CD4-positive, alpha-beta T cell (primary cell): ENCODE measurements at regions of chr15 and their contacts with region 1.

Region 1: DNA sequence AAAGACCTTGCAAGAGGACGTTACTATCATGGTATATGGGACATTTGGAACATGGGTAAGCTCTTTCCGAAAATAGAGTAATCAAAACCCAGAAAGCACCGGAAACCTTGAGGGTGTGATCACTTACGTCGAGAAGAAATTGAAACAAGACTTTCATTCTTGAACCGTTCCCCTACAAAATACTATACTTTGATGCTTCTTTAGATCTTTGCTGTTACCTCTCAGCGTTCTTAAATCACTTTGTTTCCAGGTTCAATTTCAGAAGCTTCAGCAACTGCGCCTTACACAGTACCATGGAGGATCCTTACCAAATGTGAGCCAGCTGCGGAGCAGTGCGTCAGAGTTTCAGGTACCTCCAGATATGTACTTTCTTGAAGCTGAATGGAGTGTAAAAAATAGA is 10.1 kb downstream of the CRTC3 start:
- DNase-seq: peak in 9 of 14 experiments; percentile 13 to 74 (median 45)
- ATAC-seq: peak; percentile 87
- H3K4me3 ChIP-seq: peak overlapping the region; percentile 54
- H3K4me3 Mint-ChIP-seq: peak overlapping the region; percentile 89
- H3K27ac ChIP-seq: peak overlapping the region; percentile 49 to 83
- H3K27ac Mint-ChIP-seq: peak overlapping the region; percentile 97
- H3K4me1 ChIP-seq: peaks cover 35% of the 10 kb centered on the region
- H3K4me1 Mint-ChIP-seq: peaks cover 80% of the 10 kb centered on the region
- H3K27me3 ChIP-seq: no peaks in the 10 kb centered on the region
- H3K27me3 Mint-ChIP-seq: no peaks in the 10 kb centered on the region
- CTCF ChIP-seq: no peak

Region 2: GRCh38 chr15:90529371-90530249 is 10.2 kb before region 1 on chr15 and contains the start of gene CRTC3:
- CTCF ChIA-PET with region 1: interaction called, 14 read pairs
- POLR2A ChIA-PET with region 1: interaction called, 67 read pairs
- intact Hi-C with region 1: no loop called
- DNase-seq: peak; percentile 31 to 85 (median 54)
- ATAC-seq: peak; percentile 80
- H3K4me3 ChIP-seq: peak within 1 kb of the TSS; percentile 94
- H3K4me3 Mint-ChIP-seq: peak within 1 kb of the TSS; percentile 97
- H3K27ac ChIP-seq: peak within 1 kb of the TSS; percentile 44 to 72
- H3K27ac Mint-ChIP-seq: peak within 1 kb of the TSS; percentile 92
- H3K4me1 ChIP-seq: peaks cover 36% of the 10 kb centered on the region
- H3K4me1 Mint-ChIP-seq: peaks cover 39% of the 10 kb centered on the region
- H3K27me3 ChIP-seq: no peaks in the 10 kb centered on the region
- H3K27me3 Mint-ChIP-seq: no peaks in the 10 kb centered on the region
- CTCF ChIP-seq: no peak
- total RNA-seq, gene CRTC3: 90.7 to 92.4 TPM

Region 3: DNA sequence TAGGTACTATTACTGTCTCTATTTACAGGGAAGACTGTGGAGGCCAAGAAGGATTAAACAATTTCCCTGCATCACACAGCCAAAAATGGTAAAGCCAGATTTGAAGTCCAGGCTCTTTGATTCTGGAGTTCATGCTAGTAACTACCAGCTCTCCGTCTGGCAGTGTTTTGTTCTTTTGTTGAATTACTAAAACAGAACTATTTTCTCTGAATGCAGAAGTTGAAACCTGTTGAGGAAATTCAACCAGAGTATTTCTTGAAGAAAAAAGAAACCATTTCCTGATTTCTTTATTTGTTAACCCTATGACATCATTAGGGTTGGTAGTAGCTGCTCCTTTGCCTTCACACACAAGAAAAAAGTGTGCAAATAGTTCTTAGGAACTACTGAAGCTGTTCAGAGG is 24.3 kb after region 1 on chr15:
- CTCF ChIA-PET with region 1: interaction called, 4 read pairs
- POLR2A ChIA-PET with region 1: interaction called, 23 read pairs
- intact Hi-C with region 1: loop called in 1 of 2 experiments (anchors 2 kb)
- DNase-seq: peak in 3 of 14 experiments; percentile 58 to 63 (median 61)
- ATAC-seq: peak; percentile 38
- H3K4me3 ChIP-seq: no peak overlapping the region
- H3K4me3 Mint-ChIP-seq: peak overlapping the region; percentile 85
- H3K27ac ChIP-seq: peak overlapping the region; percentile 62 to 68
- H3K27ac Mint-ChIP-seq: peak overlapping the region; percentile 93
- H3K4me1 ChIP-seq: peaks cover 79% of the 10 kb centered on the region
- H3K4me1 Mint-ChIP-seq: peaks cover 87% of the 10 kb centered on the region
- H3K27me3 ChIP-seq: no peaks in the 10 kb centered on the region
- H3K27me3 Mint-ChIP-seq: no peaks in the 10 kb centered on the region
- CTCF ChIP-seq: no peak

Region 4: DNA sequence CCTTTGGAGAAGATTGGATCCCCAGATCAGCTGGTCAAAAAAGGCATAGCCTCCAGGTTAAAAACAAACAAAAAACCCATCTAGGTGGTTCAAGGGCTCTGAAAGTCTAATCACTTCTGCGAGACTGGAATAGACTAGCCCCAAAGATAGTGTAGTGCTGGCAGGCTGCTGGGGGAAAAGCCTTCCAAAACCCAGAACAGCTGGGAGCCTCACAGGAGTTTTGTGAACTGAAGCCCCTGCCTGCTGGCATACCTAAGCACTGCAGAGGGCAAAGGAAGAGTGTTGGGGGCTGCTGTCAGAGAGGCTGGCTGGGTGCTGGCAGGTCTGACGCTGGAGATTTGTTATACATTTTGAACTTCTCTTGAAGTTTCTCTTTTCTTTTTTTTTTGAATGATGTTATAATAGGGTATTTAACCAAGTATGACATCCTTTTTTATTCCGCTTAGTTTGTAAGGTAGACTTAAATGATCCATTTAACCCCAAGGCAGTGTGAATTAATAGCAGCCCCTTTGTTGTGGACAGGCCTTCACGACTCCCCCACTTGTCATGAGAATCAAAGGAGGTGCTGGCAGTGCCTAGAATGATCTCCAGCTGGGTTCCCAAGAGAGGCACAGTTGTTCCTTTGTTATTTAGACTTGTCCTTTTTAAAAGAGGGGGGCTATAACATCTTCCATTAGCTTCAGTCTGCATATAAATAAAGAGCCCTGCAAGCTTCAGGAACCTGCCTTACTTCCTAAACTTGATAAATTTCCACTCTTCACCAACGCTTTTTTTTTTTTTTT is 43.9 kb after region 1 on chr15:
- CTCF ChIA-PET with region 1: no interaction called
- POLR2A ChIA-PET with region 1: interaction called, 10 read pairs
- intact Hi-C with region 1: no loop called
- DNase-seq: no peak
- ATAC-seq: no peak
- H3K4me3 ChIP-seq: no peak overlapping the region
- H3K4me3 Mint-ChIP-seq: no peak overlapping the region
- H3K27ac ChIP-seq: no peak overlapping the region
- H3K27ac Mint-ChIP-seq: peak overlapping the region; percentile 89
- H3K4me1 ChIP-seq: peaks cover 59% of the 10 kb centered on the region
- H3K4me1 Mint-ChIP-seq: peaks cover 66% of the 10 kb centered on the region
- H3K27me3 ChIP-seq: no peaks in the 10 kb centered on the region
- H3K27me3 Mint-ChIP-seq: no peaks in the 10 kb centered on the region
- CTCF ChIP-seq: no peak

Region 5: DNA sequence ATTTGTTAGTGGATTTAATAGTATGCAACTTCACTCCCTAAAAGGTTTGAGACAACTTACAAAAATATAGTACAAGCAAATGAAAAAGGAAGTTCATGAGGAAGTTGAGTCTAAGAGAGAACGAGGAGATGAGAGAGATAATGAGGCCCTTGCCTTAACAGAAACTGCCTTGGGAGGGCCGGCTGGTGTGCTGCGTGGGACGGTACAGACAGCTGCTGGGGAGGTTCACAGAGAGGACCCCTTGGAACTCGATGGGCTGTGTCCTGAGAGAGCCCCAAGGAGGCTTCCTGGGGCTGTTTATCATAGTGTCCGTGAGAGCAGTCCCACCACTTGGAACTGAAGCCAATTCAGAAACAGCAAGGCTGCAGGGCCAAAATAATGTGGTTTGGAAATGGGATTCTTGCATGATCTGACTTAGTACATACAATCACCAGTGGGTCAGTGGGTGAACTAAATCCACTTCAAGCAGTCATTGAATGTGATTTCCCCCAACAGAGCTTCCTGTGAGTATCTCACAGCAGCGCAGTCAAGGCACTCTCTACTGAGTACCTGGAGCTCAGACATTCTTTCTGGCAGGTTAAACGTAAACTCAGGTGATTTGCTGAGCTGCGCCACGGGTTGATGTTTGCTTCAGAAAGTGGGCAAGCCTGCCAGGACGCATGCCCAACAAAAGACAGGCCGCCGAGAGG is 80.7 kb after region 1 on chr15:
- CTCF ChIA-PET with region 1: interaction called, 6 read pairs
- POLR2A ChIA-PET with region 1: interaction called, 17 read pairs
- intact Hi-C with region 1: no loop called
- DNase-seq: peak in 7 of 14 experiments; percentile 10 to 52 (median 40)
- ATAC-seq: peak; percentile 71
- H3K4me3 ChIP-seq: peak overlapping the region; percentile 6
- H3K4me3 Mint-ChIP-seq: peak overlapping the region; percentile 25
- H3K27ac ChIP-seq: peak overlapping the region in 1 of 2 donors; percentile 41
- H3K27ac Mint-ChIP-seq: peak overlapping the region; percentile 89
- H3K4me1 ChIP-seq: peaks cover 24% of the 10 kb centered on the region
- H3K4me1 Mint-ChIP-seq: peaks cover 46% of the 10 kb centered on the region
- H3K27me3 ChIP-seq: no peaks in the 10 kb centered on the region
- H3K27me3 Mint-ChIP-seq: no peaks in the 10 kb centered on the region
- CTCF ChIP-seq: no peak